CD8-positive, alpha-beta memory T cell (primary cell): ENCODE measurements at regions of chrX and their contacts with region 1.

Region 1: DNA sequence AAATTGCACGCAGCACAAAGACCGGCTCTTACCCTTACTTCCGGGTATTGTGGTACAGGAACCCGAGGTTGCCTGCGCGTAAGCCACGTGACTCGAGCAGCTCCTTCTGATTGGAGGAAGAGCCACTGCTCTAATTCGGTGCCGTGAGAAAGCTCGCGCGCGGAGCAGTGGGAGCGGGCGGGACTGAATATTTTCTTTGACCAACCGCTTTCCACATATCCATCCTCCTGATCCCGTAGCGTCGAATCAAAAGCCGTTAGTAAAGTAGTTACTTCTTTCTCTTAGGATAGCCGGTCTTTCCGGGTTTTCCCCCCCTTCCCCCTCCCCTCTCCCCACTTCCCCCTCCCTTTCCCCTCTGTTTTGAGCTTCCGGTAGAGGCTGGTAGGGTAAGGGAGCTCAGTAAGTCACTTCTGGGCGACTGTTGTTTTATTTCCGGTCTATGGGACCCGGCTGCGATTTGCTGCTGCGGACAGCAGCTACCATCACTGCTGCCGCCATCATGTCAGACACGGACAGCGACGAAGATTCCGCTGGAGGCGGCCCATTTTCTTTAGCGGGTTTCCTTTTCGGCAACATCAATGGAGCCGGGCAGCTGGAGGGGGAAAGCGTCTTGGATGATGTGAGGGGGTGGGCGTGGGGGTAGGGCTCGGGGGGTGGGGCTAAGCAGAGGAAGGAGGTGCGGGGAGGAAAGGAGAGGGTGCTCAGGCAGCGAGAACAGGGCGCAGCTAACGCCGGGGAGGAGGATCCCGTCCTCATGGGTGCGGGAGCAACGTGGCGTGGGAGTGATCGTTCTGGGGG is at the start of gene TAF1:
- DNase-seq: peak; percentile 85 to 96 (median 88)
- H3K4me3 ChIP-seq: peak within 1 kb of the TSS; percentile 93
- H3K4me3 Mint-ChIP-seq: peak within 1 kb of the TSS; percentile 86 to 99 (median 97)
- H3K27ac ChIP-seq: peak within 1 kb of the TSS; percentile 94
- H3K27ac Mint-ChIP-seq: peak within 1 kb of the TSS; percentile 89 to 99 (median 98)
- H3K4me1 ChIP-seq: peaks cover 13% of the 10 kb centered on the region
- H3K4me1 Mint-ChIP-seq: peaks cover 27 to 30% (median 27%) of the 10 kb centered on the region in 3 donors
- H3K27me3 ChIP-seq: no peaks in the 10 kb centered on the region
- H3K27me3 Mint-ChIP-seq: peaks cover 0 to 2% of the 10 kb centered on the region in 2 donors
- total RNA-seq, gene TAF1: 34.0 to 34.7 TPM

Region 2: GRCh38 chrX:71181910-71182799 is 183.9 kb before region 1 on chrX:
- CTCF ChIA-PET with region 1: no interaction called
- POLR2A ChIA-PET with region 1: interaction called, 24 read pairs
- DNase-seq: peak; percentile 65 to 89 (median 82)
- H3K4me3 ChIP-seq: peak overlapping the region; percentile 80
- H3K4me3 Mint-ChIP-seq: peak overlapping the region; percentile 94 to 98 (median 96)
- H3K27ac ChIP-seq: peak overlapping the region; percentile 88
- H3K27ac Mint-ChIP-seq: peak overlapping the region; percentile 95 to 100 (median 99)
- H3K4me1 ChIP-seq: peaks cover 6% of the 10 kb centered on the region
- H3K4me1 Mint-ChIP-seq: peaks cover 8 to 31% (median 23%) of the 10 kb centered on the region in 3 donors
- H3K27me3 ChIP-seq: no peaks in the 10 kb centered on the region
- H3K27me3 Mint-ChIP-seq: peaks cover 0 to 10% of the 10 kb centered on the region in 2 donors

Region 3: GRCh38 chrX:71254092-71254941 is 111.8 kb before region 1 on chrX and contains the start of gene ZMYM3:
- CTCF ChIA-PET with region 1: interaction called, 4 read pairs
- POLR2A ChIA-PET with region 1: interaction called, 32 read pairs
- DNase-seq: peak; percentile 73 to 90 (median 79)
- H3K4me3 ChIP-seq: peak within 1 kb of the TSS; percentile 81
- H3K4me3 Mint-ChIP-seq: peak within 1 kb of the TSS; percentile 84 to 96 (median 90)
- H3K27ac ChIP-seq: peak within 1 kb of the TSS; percentile 76
- H3K27ac Mint-ChIP-seq: peak within 1 kb of the TSS; percentile 79 to 100 (median 94)
- H3K4me1 ChIP-seq: peaks cover 28% of the 10 kb centered on the region
- H3K4me1 Mint-ChIP-seq: peaks cover 15 to 32% (median 17%) of the 10 kb centered on the region in 3 donors
- H3K27me3 ChIP-seq: no peaks in the 10 kb centered on the region
- H3K27me3 Mint-ChIP-seq: peaks cover 0 to 8% of the 10 kb centered on the region in 2 donors
- total RNA-seq, gene ZMYM3: 16.5 to 16.7 TPM

Region 4: GRCh38 chrX:71283403-71284143 is 82.5 kb before region 1 on chrX and contains the start of gene NONO:
- CTCF ChIA-PET with region 1: interaction called, 8 read pairs
- POLR2A ChIA-PET with region 1: interaction called, 30 read pairs
- DNase-seq: peak; percentile 74 to 92 (median 88)
- H3K4me3 ChIP-seq: peak within 1 kb of the TSS; percentile 65
- H3K4me3 Mint-ChIP-seq: peak within 1 kb of the TSS; percentile 95 to 100 (median 97)
- H3K27ac ChIP-seq: peak within 1 kb of the TSS; percentile 89
- H3K27ac Mint-ChIP-seq: peak within 1 kb of the TSS; percentile 98 to 100 (median 99)
- H3K4me1 ChIP-seq: peaks cover 16% of the 10 kb centered on the region
- H3K4me1 Mint-ChIP-seq: peaks cover 25 to 39% (median 32%) of the 10 kb centered on the region in 3 donors
- H3K27me3 ChIP-seq: no peaks in the 10 kb centered on the region
- H3K27me3 Mint-ChIP-seq: peaks cover 0 to 3% of the 10 kb centered on the region in 2 donors
- total RNA-seq, gene NONO: 532 to 542 TPM

Region 5: GRCh38 chrX:71532753-71533425 is 166.8 kb after region 1 on chrX and contains the start of gene OGT:
- CTCF ChIA-PET with region 1: no interaction called
- POLR2A ChIA-PET with region 1: interaction called, 17 read pairs
- DNase-seq: peak; percentile 84 to 97 (median 92)
- H3K4me3 ChIP-seq: peak within 1 kb of the TSS; percentile 96
- H3K4me3 Mint-ChIP-seq: peak within 1 kb of the TSS; percentile 94 to 100 (median 97)
- H3K27ac ChIP-seq: peak within 1 kb of the TSS; percentile 89
- H3K27ac Mint-ChIP-seq: peak within 1 kb of the TSS; percentile 94 to 98 (median 96)
- H3K4me1 ChIP-seq: peaks cover 17% of the 10 kb centered on the region
- H3K4me1 Mint-ChIP-seq: peaks cover 19 to 34% (median 27%) of the 10 kb centered on the region in 3 donors
- H3K27me3 ChIP-seq: no peaks in the 10 kb centered on the region
- H3K27me3 Mint-ChIP-seq: peaks cover 0 to 14% of the 10 kb centered on the region in 2 donors
- total RNA-seq, gene OGT: 211 to 216 TPM